ENCODE measurements at regions of chr5 and their contacts with region 1.

Region 1: GRCh38 chr5:151213800-151214613 is 9.9 kb downstream of the CCDC69 start:
- DNase-seq: peak; percentile 83 to 92 (median 84)
- H3K4me3 ChIP-seq: peak overlapping the region; percentile 49 to 85
- H3K4me3 Mint-ChIP-seq: peak overlapping the region; percentile 86 to 95 (median 88)
- H3K27ac ChIP-seq: peak overlapping the region; percentile 90
- H3K27ac Mint-ChIP-seq: peak overlapping the region; percentile 86 to 99 (median 95)
- H3K4me1 ChIP-seq: peaks cover 98% of the 10 kb centered on the region
- H3K4me1 Mint-ChIP-seq: peaks cover 66 to 93% (median 76%) of the 10 kb centered on the region in 4 donors
- H3K27me3 ChIP-seq: no peaks in the 10 kb centered on the region
- H3K27me3 Mint-ChIP-seq: no peaks in the 10 kb centered on the region

Region 2: GRCh38 chr5:150624334-150625163 is 589.5 kb before region 1 on chr5:
- CTCF ChIA-PET with region 1: no interaction called
- POLR2A ChIA-PET with region 1: no interaction called
- intact Hi-C with region 1: no loop called
- DNase-seq: peak; percentile 9 to 44 (median 25)
- H3K4me3 ChIP-seq: peak overlapping the region in 1 of 2 donors; percentile 47
- H3K4me3 Mint-ChIP-seq: peak overlapping the region; percentile 78 to 92 (median 90)
- H3K27ac ChIP-seq: no peak overlapping the region
- H3K27ac Mint-ChIP-seq: peak overlapping the region in 5 of 7 donors; percentile 33 to 88 (median 81)
- H3K4me1 ChIP-seq: peaks cover 20% of the 10 kb centered on the region
- H3K4me1 Mint-ChIP-seq: peaks cover 12 to 16% (median 16%) of the 10 kb centered on the region in 4 donors
- H3K27me3 ChIP-seq: no peaks in the 10 kb centered on the region
- H3K27me3 Mint-ChIP-seq: peaks cover 1 to 16% of the 10 kb centered on the region in 2 donors

Region 3: DNA sequence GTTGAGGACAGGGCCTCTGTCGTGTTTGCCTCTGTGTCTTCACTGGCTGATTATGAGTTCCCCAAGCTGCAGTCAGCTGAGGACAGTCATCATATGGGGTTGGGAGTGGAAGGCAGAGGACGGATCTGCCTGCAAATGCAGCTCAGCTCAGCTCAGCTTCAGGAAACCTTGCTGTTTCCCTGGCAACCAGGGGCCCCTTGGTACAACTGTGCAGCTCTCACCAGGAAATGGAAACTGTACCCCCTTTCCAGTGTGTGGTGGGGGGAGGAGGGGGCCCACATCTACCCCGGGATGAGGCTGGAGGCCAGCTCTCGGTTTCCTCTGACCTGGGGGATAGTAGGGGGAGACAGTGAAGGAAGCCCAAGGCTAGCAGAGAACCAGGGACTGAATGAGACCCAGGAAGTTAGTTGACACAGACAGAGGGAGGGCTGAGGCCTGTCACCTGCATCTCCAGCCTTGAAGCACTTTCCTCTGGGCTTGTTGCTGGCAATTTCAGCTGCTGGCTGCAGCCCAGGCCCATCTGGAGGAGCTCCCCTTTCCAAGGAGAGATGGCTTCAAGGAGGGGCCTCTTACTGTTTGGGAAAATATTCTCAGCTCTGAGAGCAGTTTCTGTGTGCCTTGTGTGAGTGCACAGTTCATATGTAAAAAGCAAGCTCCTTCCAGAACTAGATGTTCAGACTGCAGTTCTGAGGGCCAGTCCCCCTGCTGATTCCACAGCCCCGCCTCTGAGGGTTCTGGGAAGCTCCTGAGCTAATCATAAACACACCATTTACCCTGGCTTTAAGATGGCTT is 63.3 kb before region 1 on chr5:
- CTCF ChIA-PET with region 1: interaction called, 8 read pairs
- POLR2A ChIA-PET with region 1: interaction called, 12 read pairs
- intact Hi-C with region 1: no loop called
- DNase-seq: peak; percentile 81 to 94 (median 83)
- H3K4me3 ChIP-seq: peak overlapping the region; percentile 1 to 38
- H3K4me3 Mint-ChIP-seq: peak overlapping the region; percentile 60 to 98 (median 86)
- H3K27ac ChIP-seq: peak overlapping the region; percentile 84
- H3K27ac Mint-ChIP-seq: peak overlapping the region; percentile 94 to 99 (median 96)
- H3K4me1 ChIP-seq: peaks cover 100% of the 10 kb centered on the region
- H3K4me1 Mint-ChIP-seq: peaks cover 78 to 100% (median 90%) of the 10 kb centered on the region in 4 donors
- H3K27me3 ChIP-seq: no peaks in the 10 kb centered on the region
- H3K27me3 Mint-ChIP-seq: no peaks in the 10 kb centered on the region

Region 4: GRCh38 chr5:151164686-151165392 is 49.2 kb before region 1 on chr5:
- CTCF ChIA-PET with region 1: interaction called, 15 read pairs
- POLR2A ChIA-PET with region 1: interaction called, 11 read pairs
- intact Hi-C with region 1: no loop called
- DNase-seq: peak; percentile 78 to 84 (median 81)
- H3K4me3 ChIP-seq: no peak overlapping the region
- H3K4me3 Mint-ChIP-seq: peak overlapping the region in 1 of 8 donors; percentile 4
- H3K27ac ChIP-seq: no peak overlapping the region
- H3K27ac Mint-ChIP-seq: peak overlapping the region in 5 of 7 donors; percentile 10 to 75 (median 52)
- H3K4me1 ChIP-seq: no peaks in the 10 kb centered on the region
- H3K4me1 Mint-ChIP-seq: peaks cover 14 to 22% (median 19%) of the 10 kb centered on the region in 4 donors
- H3K27me3 ChIP-seq: no peaks in the 10 kb centered on the region
- H3K27me3 Mint-ChIP-seq: no peaks in the 10 kb centered on the region

Region 5: DNA sequence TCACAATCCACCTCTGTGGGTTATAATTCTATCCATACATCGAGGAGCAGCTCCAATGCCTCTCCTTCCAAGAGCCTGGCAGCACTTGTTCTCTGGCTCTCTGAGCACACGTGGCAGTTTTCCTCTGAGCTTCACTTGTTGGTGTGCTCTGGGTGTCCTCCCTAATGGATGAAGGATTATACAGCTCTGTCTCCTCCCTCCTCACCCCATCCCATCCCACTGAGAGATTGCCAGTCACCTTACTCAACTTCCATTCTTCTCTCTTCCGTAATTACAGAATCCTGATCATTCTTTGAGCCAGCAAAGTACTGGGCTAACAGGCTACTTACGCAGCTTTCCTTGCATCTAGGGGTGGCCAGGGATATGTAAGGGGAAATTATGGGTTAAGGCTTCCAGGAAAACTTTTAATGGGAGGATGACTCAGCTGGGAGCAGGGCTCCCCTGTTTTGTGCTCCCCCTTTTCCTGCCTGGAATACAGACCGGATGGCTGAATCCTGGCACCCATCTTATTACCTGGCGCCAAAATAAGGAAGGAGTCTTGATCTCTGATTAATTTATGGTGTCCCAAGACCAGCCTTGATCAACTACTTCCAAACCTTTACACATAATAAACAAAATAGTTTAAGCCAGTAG is 16.2 kb after region 1 on chr5:
- CTCF ChIA-PET with region 1: interaction called, 81 read pairs
- POLR2A ChIA-PET with region 1: interaction called, 335 read pairs
- intact Hi-C with region 1: loop called (anchors 2 kb)
- DNase-seq: no peak
- H3K4me3 ChIP-seq: no peak overlapping the region
- H3K4me3 Mint-ChIP-seq: no peak overlapping the region
- H3K27ac ChIP-seq: no peak overlapping the region
- H3K27ac Mint-ChIP-seq: no peak overlapping the region
- H3K4me1 ChIP-seq: peaks cover 24% of the 10 kb centered on the region
- H3K4me1 Mint-ChIP-seq: peaks cover 12 to 19% (median 16%) of the 10 kb centered on the region in 4 donors
- H3K27me3 ChIP-seq: no peaks in the 10 kb centered on the region
- H3K27me3 Mint-ChIP-seq: no peaks in the 10 kb centered on the region

Region 6: GRCh38 chr5:151252762-151253604 is 39.0 kb after region 1 on chr5 and contains the start of gene GM2A:
- CTCF ChIA-PET with region 1: interaction called, 10 read pairs
- POLR2A ChIA-PET with region 1: interaction called, 67 read pairs
- intact Hi-C with region 1: loop called (anchors 1 kb)
- DNase-seq: peak; percentile 96 to 99 (median 97)
- H3K4me3 ChIP-seq: peak within 1 kb of the TSS; percentile 64 to 68
- H3K4me3 Mint-ChIP-seq: peak within 1 kb of the TSS; percentile 89 to 97 (median 94)
- H3K27ac ChIP-seq: peak within 1 kb of the TSS; percentile 66
- H3K27ac Mint-ChIP-seq: peak within 1 kb of the TSS; percentile 86 to 96 (median 94)
- H3K4me1 ChIP-seq: peaks cover 37% of the 10 kb centered on the region
- H3K4me1 Mint-ChIP-seq: peaks cover 17 to 59% (median 36%) of the 10 kb centered on the region in 4 donors
- H3K27me3 ChIP-seq: no peaks in the 10 kb centered on the region
- H3K27me3 Mint-ChIP-seq: no peaks in the 10 kb centered on the region
- total RNA-seq, gene GM2A: 20.4 to 23.1 TPM

Measured in CD4-positive, alpha-beta memory T cell (primary cell).